Activated CD8-positive, alpha-beta T cell treated with anti-CD3 and anti-CD28 coated beads for 36 hours (primary cell): ENCODE measurements at regions of chr5 and their contacts with region 1.

Region 1: GRCh38 chr5:93607367-93608258 is 24.6 kb downstream of the NR2F1 start:
- DNase-seq: peak; percentile 59
- ATAC-seq: peak; percentile 81
- H3K4me3 Mint-ChIP-seq: no peak overlapping the region
- H3K27ac Mint-ChIP-seq: no peak overlapping the region
- H3K4me1 Mint-ChIP-seq: peaks cover 15% of the 10 kb centered on the region
- H3K27me3 Mint-ChIP-seq: peaks cover 77% of the 10 kb centered on the region
- CTCF ChIP-seq: peak; percentile 45

Region 2: GRCh38 chr5:93570294-93571113 is 37.1 kb before region 1 on chr5:
- CTCF ChIA-PET with region 1: interaction called, 5 read pairs
- POLR2A ChIA-PET with region 1: no interaction called
- intact Hi-C with region 1: loop called (anchors 5 kb)
- DNase-seq: no peak
- ATAC-seq: peak; percentile 66
- H3K4me3 Mint-ChIP-seq: no peak overlapping the region
- H3K27ac Mint-ChIP-seq: no peak overlapping the region
- H3K4me1 Mint-ChIP-seq: peaks cover 18% of the 10 kb centered on the region
- H3K27me3 Mint-ChIP-seq: peaks cover 70% of the 10 kb centered on the region
- CTCF ChIP-seq: no peak

Region 3: DNA sequence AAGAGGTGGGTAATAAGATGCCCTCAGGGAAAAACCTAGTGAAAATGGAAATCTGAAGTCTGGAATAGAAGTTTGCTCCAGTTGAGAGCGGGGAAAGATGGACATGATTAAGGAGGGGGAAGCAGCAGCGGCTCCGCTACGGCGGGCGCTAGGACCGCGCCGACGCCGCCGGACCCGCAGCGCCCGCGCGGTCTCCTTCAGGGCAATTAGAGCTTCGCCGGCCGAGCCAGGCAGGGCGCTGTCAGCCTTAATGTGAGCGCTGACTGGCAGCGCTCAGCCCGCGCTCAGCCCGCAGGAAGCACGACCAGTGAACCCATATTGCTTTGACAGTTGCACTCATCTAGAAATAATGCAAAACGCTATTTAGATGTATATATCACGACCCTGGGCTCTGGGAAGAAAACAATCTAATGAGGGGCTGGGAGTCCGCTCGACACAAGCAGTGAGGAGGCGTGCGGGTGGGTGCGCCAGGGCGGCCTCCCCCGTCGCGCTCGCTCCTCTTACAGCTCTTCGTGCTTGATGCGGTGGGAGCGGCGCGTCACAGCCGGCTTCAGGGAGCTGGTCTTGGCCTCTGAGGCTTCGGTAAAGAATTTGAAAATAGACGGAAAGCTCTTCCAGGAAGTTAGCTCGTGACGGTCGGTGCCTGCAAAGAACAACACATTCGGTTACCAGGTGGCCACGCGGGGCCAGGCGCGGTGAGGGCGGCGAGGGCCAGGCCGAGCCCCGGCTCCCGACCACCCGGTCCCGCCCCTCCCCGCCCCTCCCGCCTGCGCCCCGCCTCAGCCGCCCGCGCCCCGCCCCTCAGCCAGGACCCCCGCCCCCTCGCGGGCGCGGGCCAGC is 13.1 kb after region 1 on chr5:
- CTCF ChIA-PET with region 1: interaction called, 11 read pairs
- POLR2A ChIA-PET with region 1: no interaction called
- intact Hi-C with region 1: no loop called
- DNase-seq: peak; percentile 75
- ATAC-seq: peak; percentile 90
- H3K4me3 Mint-ChIP-seq: peak overlapping the region; percentile 94
- H3K27ac Mint-ChIP-seq: peak overlapping the region; percentile 77
- H3K4me1 Mint-ChIP-seq: peaks cover 30% of the 10 kb centered on the region
- H3K27me3 Mint-ChIP-seq: peaks cover 12% of the 10 kb centered on the region
- CTCF ChIP-seq: no peak

Region 4: DNA sequence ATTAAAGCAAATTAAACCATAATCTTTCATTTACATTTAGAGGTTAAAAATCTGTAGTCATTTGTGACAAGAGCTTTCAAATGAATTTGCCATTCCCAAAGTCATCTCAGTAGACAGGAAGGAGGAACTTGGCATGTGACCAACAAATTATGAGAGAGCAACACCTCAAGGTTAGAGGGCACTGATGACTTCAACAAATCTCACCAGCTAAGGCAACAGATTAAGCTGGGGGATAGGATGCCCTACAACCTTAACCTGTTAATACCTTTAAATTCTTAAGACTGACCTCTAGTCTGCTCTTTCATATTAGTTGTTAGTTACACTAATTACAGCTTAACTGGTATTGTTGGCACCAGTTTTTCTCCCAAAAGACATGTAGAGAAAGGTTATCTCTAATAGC is 115.4 kb after region 1 on chr5:
- CTCF ChIA-PET with region 1: no interaction called
- POLR2A ChIA-PET with region 1: no interaction called
- intact Hi-C with region 1: no loop called
- DNase-seq: no peak
- ATAC-seq: no peak
- H3K4me3 Mint-ChIP-seq: no peak overlapping the region
- H3K27ac Mint-ChIP-seq: no peak overlapping the region
- H3K4me1 Mint-ChIP-seq: peaks cover 11% of the 10 kb centered on the region
- H3K27me3 Mint-ChIP-seq: no peaks in the 10 kb centered on the region
- CTCF ChIP-seq: no peak